GM10248 (cell line): ENCODE measurements at regions of chr14 and their contacts with region 1.

Region 1: DNA sequence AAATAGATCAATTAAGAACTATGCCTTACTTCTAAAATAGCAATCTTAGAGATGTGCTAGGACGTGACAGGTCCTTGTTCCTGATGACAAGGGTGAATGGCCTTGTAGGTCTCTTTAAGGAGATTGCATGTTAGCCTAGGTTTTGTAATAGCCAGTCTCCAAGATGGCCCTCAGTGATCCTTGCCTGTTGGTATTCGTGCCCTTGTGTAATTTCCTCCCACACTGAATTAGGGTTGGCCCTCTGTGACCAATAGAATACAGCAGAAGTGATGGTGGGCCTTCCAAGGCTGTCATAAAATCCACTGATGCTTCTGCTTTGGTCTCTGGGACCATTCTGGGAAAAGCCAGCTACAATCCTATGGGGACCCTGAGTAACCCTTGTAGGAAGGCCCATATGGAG is 38.2 kb upstream of the SNX6 start:
- DNase-seq: no peak
- CTCF ChIP-seq: no peak

Region 2: DNA sequence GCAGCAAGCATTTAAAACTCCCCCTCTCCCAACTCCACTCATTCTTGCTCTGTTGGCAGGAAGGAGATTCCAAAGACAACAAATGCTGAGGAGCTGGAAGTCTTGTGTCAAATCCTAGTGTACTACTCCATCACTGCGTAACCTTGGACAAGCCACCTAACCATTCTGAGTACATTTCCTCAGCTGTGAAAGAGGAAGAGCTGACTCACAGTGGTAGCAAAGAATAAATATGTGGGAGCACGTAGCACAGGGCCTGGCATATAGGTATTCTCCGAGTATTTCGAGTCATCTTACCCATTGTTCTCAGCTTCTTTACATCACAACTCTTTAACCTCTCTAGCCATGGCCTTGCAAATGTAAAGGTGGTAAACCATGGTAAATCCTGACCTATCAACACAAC is 746.0 kb before region 1 on chr14:
- CTCF ChIA-PET with region 1: no interaction called
- POLR2A ChIA-PET with region 1: no interaction called
- DNase-seq: no peak
- CTCF ChIP-seq: no peak

Region 3: GRCh38 chr14:34714320-34715126 is 46.4 kb after region 1 on chr14 and contains the start of gene CFL2:
- CTCF ChIA-PET with region 1: interaction called, 39 read pairs
- POLR2A ChIA-PET with region 1: no interaction called
- DNase-seq: peak; percentile 91
- CTCF ChIP-seq: no peak

Region 4: DNA sequence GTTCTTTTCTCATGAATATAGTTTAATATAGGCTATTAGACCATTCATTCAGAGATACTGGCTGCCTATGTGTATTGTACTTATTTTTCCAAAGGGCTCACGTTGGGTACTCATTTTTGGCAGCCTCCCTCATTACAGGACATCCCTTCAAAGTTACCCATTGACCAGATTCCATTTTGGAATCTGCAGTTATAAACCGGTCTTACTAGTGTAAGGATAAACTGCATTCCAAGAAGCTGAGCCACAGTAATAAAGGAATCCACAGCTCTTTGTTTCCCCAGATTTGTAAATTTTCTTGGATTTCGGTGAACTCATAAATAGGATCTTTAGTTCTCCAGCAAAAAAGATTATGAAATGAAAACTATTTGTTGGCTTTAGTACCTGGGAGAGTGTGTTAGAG is 65.1 kb after region 1 on chr14:
- CTCF ChIA-PET with region 1: interaction called, 20 read pairs
- POLR2A ChIA-PET with region 1: no interaction called
- DNase-seq: no peak
- CTCF ChIP-seq: no peak